ENCODE measurements at regions of chr16 and their contacts with region 1.

Region 1: GRCh38 chr16:10876799-10877341 is at the start of gene CIITA:
- DNase-seq: peak; percentile 80
- H3K4me3 Mint-ChIP-seq: peak within 1 kb of the TSS; percentile 75
- H3K27ac Mint-ChIP-seq: peak within 1 kb of the TSS; percentile 24
- H3K4me1 Mint-ChIP-seq: peaks cover 69% of the 10 kb centered on the region
- H3K27me3 Mint-ChIP-seq: peaks cover 68% of the 10 kb centered on the region
- total RNA-seq, gene CIITA: 1.8 to 3.2 TPM

Region 2: GRCh38 chr16:10473246-10473645 is 403.6 kb before region 1 on chr16:
- CTCF ChIA-PET with region 1: no interaction called
- POLR2A ChIA-PET with region 1: no interaction called
- intact Hi-C with region 1: no loop called
- DNase-seq: no peak
- H3K4me3 Mint-ChIP-seq: no peak overlapping the region
- H3K27ac Mint-ChIP-seq: no peak overlapping the region
- H3K4me1 Mint-ChIP-seq: no peaks in the 10 kb centered on the region
- H3K27me3 Mint-ChIP-seq: no peaks in the 10 kb centered on the region

Region 3: DNA sequence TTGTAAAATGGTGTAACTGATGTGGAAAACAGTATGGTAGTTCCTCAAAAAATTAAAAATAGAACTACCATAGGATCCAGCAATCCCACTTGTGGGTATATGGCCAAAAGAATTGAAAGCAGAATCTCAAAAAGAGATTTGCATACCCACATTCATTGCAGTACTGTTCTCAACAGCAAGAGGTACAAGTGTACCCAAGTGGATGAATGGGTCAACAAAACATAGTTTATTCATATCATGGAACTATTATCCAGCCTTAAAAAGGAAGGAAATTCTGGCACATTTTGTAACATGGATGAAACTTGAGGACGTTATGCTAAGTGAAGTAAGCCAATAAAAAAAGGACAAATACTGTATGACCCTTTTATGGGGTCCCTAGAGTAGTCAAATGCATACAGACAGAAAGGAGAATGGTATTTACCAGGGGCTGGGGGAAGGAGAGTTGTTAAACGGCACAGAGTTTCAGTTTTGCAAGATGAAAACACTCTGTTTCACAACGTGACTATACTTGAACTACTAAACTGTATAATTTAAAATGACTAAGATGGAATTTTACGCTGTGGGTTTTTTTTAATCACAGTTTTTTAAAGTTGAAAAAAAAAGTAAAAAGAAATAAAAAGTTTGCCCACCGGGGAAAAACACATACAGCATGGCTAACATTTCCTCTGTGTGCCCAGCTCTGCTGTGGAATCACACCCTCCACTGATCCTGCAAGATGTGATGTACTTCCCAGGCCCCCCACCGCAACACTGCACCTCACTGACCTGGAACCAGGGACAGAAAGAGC is 64.4 kb before region 1 on chr16:
- CTCF ChIA-PET with region 1: no interaction called
- POLR2A ChIA-PET with region 1: no interaction called
- intact Hi-C with region 1: loop called (anchors 1 kb)
- DNase-seq: peak; percentile 16
- H3K4me3 Mint-ChIP-seq: no peak overlapping the region
- H3K27ac Mint-ChIP-seq: peak overlapping the region; percentile 43
- H3K4me1 Mint-ChIP-seq: peaks cover 16% of the 10 kb centered on the region
- H3K27me3 Mint-ChIP-seq: peaks cover 7% of the 10 kb centered on the region

Region 4: DNA sequence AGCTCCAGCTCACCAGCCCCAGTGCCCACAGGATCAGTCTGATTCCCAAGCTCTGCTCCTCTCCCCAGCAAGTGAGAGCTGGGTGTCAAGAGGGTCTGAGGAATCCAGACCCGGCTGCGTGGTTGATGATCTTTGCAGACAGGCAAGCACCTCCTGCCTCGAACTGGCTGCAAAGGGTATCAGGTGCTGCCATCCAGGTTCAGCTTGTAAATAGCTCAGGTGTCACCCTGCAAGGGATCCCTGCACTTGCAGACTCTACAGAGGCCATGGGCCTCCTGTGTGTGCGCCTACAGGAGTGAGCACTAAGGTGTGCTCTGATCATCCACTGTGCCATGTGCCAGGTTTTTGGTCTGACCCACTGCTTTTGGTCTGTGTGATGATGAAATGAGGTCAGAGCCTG is 49.2 kb after region 1 on chr16:
- CTCF ChIA-PET with region 1: no interaction called
- POLR2A ChIA-PET with region 1: no interaction called
- intact Hi-C with region 1: no loop called
- DNase-seq: no peak
- H3K4me3 Mint-ChIP-seq: no peak overlapping the region
- H3K27ac Mint-ChIP-seq: no peak overlapping the region
- H3K4me1 Mint-ChIP-seq: no peaks in the 10 kb centered on the region
- H3K27me3 Mint-ChIP-seq: no peaks in the 10 kb centered on the region

Measured in activated CD4-positive, alpha-beta memory T cell treated with anti-CD3 and anti-CD28 coated beads for 36 hours (primary cell).